Sciatic nerve (tissue), 2 donors: ENCODE measurements at regions of chr4 and their contacts with region 1.

Region 1: DNA sequence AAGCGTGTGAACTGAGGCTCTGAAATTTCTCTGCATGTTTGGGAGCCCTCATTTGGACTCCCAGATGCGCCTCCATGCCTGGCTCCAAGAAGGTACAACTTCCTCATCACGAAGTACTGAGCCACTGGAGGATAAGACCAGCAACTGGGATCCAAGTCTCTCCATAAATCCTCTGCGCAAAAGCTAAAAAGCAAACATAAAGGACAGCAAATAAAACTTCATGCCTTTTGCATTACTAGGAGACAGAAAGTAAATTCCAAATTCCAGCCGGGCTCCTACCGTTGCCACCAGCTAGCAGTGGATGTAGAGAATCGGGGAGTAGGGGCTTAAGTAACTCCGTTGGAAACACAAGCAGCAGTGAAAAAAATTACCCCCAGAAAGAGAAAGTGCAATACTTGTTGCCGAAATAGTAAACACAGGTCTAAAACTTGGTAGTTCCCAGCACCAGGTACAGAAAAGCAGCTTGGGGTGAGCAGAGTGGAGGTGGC is 477.1 kb upstream of the TENM3 start:
- DNase-seq: no peak
- ATAC-seq: no peak

Region 2: GRCh38 chr4:181755846-181756245 is 10.3 kb before region 1 on chr4:
- intact Hi-C with region 1: loop called (anchors 1 kb)
- DNase-seq: no peak
- ATAC-seq: no peak